ENCODE measurements at regions of chr12 and their contacts with region 1.

Region 1: GRCh38 chr12:131076791-131077747 is 123.4 kb downstream of the ADGRD1 start:
- DNase-seq: no peak
- H3K4me3 Mint-ChIP-seq: no peak overlapping the region
- H3K27ac Mint-ChIP-seq: no peak overlapping the region
- H3K4me1 Mint-ChIP-seq: no peaks in the 10 kb centered on the region
- H3K27me3 Mint-ChIP-seq: peaks cover 45% of the 10 kb centered on the region
- CTCF ChIP-seq: no peak

Region 2: GRCh38 chr12:130998136-130998535 is 78.9 kb before region 1 on chr12:
- CTCF ChIA-PET with region 1: interaction called, 10 read pairs
- intact Hi-C with region 1: no loop called
- DNase-seq: no peak
- H3K4me3 Mint-ChIP-seq: no peak overlapping the region
- H3K27ac Mint-ChIP-seq: no peak overlapping the region
- H3K4me1 Mint-ChIP-seq: no peaks in the 10 kb centered on the region
- H3K27me3 Mint-ChIP-seq: peaks cover 3% of the 10 kb centered on the region
- CTCF ChIP-seq: no peak

Region 3: DNA sequence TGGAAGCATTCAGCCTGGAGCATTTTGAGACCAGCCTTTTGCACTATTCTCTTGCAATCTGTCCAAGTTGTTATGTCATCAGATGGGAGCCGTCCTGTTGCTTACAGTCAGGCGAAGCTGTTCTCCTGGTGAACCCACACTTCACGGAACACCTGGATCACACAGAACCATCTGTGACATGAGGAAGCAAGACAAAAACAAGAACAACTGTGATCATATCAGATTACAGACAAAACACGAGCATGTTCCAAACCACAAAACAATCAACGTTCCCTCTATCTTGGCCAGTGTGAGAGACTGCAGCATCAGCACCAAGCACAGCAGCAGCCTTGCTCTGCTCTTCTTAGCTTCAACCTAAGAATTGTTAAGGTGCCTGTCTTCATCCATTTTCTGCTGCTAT is 453.4 kb after region 1 on chr12:
- CTCF ChIA-PET with region 1: no interaction called
- intact Hi-C with region 1: no loop called
- DNase-seq: no peak
- H3K4me3 Mint-ChIP-seq: no peak overlapping the region
- H3K27ac Mint-ChIP-seq: no peak overlapping the region
- H3K4me1 Mint-ChIP-seq: no peaks in the 10 kb centered on the region
- H3K27me3 Mint-ChIP-seq: peaks cover 92% of the 10 kb centered on the region
- CTCF ChIP-seq: no peak